ENCODE measurements at regions of chr16 and their contacts with region 1.

Region 1: GRCh38 chr16:63426275-63426870 is 1390.1 kb upstream of the CDH8 start:
- DNase-seq: no peak
- ATAC-seq: no peak
- H3K4me3 ChIP-seq: no peak overlapping the region
- H3K4me3 Mint-ChIP-seq: no peak overlapping the region
- H3K27ac ChIP-seq: no peak overlapping the region
- H3K27ac Mint-ChIP-seq: no peak overlapping the region
- H3K4me1 ChIP-seq: no peaks in the 10 kb centered on the region
- H3K4me1 Mint-ChIP-seq: no peaks in the 10 kb centered on the region
- H3K27me3 ChIP-seq: no peaks in the 10 kb centered on the region
- H3K27me3 Mint-ChIP-seq: no peaks in the 10 kb centered on the region
- CTCF ChIP-seq: no peak

Region 2: DNA sequence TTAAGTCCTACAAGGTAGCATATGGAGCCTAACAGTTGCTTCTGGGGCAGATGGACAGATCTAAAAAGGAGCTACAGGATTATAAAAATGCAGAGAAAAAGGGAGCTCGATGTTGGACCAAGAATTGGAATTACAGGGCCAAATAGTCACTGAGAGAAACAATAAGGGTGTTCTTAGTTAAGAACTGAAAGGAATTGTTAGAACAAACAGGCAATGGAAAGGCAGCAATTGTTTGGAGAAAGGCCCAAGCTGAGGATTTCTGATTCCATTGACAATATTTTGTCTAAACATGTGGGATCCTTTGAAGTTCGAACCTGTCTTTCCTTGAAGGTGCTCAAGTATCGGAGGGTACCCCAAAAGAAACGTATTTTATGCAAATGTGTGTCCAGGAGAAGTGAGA is 876.5 kb before region 1 on chr16:
- CTCF ChIA-PET with region 1: no interaction called
- POLR2A ChIA-PET with region 1: no interaction called
- intact Hi-C with region 1: loop called in 1 of 2 experiments (anchors 5 kb)
- DNase-seq: no peak
- ATAC-seq: no peak
- H3K4me3 ChIP-seq: no peak overlapping the region
- H3K4me3 Mint-ChIP-seq: no peak overlapping the region
- H3K27ac ChIP-seq: no peak overlapping the region
- H3K27ac Mint-ChIP-seq: no peak overlapping the region
- H3K4me1 ChIP-seq: no peaks in the 10 kb centered on the region
- H3K4me1 Mint-ChIP-seq: no peaks in the 10 kb centered on the region
- H3K27me3 ChIP-seq: no peaks in the 10 kb centered on the region
- H3K27me3 Mint-ChIP-seq: no peaks in the 10 kb centered on the region
- CTCF ChIP-seq: no peak

Region 3: GRCh38 chr16:63473725-63474124 is 47.4 kb after region 1 on chr16:
- CTCF ChIA-PET with region 1: no interaction called
- POLR2A ChIA-PET with region 1: no interaction called
- intact Hi-C with region 1: no loop called
- DNase-seq: no peak
- ATAC-seq: no peak
- H3K4me3 ChIP-seq: no peak overlapping the region
- H3K4me3 Mint-ChIP-seq: no peak overlapping the region
- H3K27ac ChIP-seq: no peak overlapping the region
- H3K27ac Mint-ChIP-seq: no peak overlapping the region
- H3K4me1 ChIP-seq: no peaks in the 10 kb centered on the region
- H3K4me1 Mint-ChIP-seq: no peaks in the 10 kb centered on the region
- H3K27me3 ChIP-seq: no peaks in the 10 kb centered on the region
- H3K27me3 Mint-ChIP-seq: no peaks in the 10 kb centered on the region
- CTCF ChIP-seq: no peak

Measured in CD8-positive, alpha-beta T cell (primary cell).